ENCODE measurements at regions of chr2 and their contacts with region 1.

Region 1: GRCh38 chr2:85420536-85421259 is 2.2 kb downstream of the SH2D6 start:
- DNase-seq: peak; percentile 90 to 96
- H3K4me3 ChIP-seq: no peak overlapping the region
- H3K4me3 Mint-ChIP-seq: peak overlapping the region; percentile 69
- H3K27ac Mint-ChIP-seq: peak overlapping the region; percentile 80
- H3K4me1 ChIP-seq: peaks cover 47% of the 10 kb centered on the region
- H3K4me1 Mint-ChIP-seq: peaks cover 36% of the 10 kb centered on the region
- H3K27me3 ChIP-seq: no peaks in the 10 kb centered on the region
- H3K27me3 Mint-ChIP-seq: no peaks in the 10 kb centered on the region
- CTCF ChIP-seq: peak; percentile 99 to 100

Region 2: DNA sequence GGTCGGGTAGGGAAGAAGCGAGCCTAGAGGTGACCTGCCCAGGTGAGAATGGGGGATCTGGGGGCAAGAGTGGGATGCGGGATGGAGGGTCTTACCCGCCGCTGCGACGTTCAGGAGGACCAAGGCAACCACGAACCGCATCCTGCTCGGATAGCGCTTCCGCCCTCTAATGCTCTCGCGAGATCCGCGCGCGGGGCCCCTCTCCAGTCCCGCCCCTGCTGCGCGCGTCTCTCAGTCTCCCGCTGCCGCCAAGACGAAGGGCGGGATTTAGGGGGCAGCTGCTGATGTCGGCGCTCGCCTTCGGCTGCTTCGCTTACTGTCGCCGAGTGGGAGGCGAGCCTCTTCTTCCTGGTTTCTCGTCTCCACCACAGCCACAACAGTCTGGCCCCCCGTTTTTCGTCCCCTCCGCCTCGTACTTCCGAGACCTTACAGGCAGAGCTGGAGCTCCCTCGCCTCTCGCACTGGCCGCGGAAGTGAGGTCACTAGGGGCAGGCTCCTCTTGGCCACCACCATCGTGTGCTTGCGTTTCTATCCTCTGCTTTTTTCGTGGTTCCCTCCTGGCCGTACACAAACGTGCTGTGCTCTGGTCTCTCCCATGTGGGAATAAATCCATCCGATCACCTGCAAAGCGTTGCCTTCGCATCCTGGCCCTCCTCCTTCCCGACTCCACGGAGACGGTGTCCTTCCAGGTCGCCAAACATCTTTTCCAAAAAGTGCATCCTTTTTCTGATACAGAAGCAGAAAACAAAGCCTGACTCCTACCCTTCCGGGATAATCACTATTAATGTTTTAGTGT is 92.7 kb before region 1 on chr2 and contains the start of gene TGOLN2:
- CTCF ChIA-PET with region 1: no interaction called
- POLR2A ChIA-PET with region 1: interaction called, 8 read pairs
- intact Hi-C with region 1: loop called (anchors 2 kb)
- DNase-seq: peak; percentile 91 to 94
- H3K4me3 ChIP-seq: peak within 1 kb of the TSS; percentile 93
- H3K4me3 Mint-ChIP-seq: peak within 1 kb of the TSS; percentile 86
- H3K27ac Mint-ChIP-seq: peak within 1 kb of the TSS; percentile 97
- H3K4me1 ChIP-seq: peaks cover 25% of the 10 kb centered on the region
- H3K4me1 Mint-ChIP-seq: peaks cover 22% of the 10 kb centered on the region
- H3K27me3 ChIP-seq: no peaks in the 10 kb centered on the region
- H3K27me3 Mint-ChIP-seq: no peaks in the 10 kb centered on the region
- CTCF ChIP-seq: peak in 1 of 2 experiments; percentile 14
- total RNA-seq, gene TGOLN2: 109 and 119 TPM in 2 replicates

Region 3: DNA sequence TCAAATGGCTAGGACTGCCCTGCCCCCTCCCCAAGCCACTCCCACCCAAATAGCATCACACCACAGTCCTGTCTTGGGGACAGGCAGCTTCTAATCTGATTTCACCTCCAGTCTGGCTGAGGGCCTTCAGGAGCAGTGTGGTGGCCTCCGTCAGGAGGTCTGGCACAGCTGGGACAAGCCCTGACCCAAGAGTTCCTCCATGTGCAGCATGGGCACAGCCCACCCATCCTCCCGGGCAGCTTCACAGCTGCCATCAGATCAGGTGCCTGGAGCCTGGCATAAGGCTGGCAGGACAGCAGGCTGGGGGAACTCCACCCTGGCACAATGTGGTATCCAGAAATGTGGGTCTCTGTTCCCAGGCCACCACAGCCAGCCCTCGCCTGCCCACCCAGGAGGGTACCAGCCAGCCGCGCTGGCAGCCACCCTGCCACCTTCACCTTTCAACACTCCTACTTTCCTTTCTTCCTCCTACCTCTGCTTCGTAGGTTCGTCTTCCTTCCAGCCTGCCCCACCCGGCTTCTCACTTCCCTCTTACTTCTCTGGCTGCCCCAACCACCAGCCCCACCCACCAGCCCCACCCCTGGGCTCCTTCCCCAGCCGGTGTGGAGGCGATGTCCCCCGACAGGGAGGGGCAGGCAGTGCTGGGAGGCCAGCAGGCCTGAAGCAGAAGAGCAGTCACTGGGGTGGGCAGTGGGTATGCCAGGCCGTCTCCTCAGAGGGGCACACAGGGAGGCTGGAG is 10.7 kb before region 1 on chr2 and contains the start of gene CAPG:
- CTCF ChIA-PET with region 1: no interaction called
- POLR2A ChIA-PET with region 1: interaction called, 10 read pairs
- intact Hi-C with region 1: no loop called
- DNase-seq: peak in 1 of 2 experiments; percentile 24
- H3K4me3 ChIP-seq: no peak within 1 kb of the TSS
- H3K4me3 Mint-ChIP-seq: no peak within 1 kb of the TSS
- H3K27ac Mint-ChIP-seq: no peak within 1 kb of the TSS
- H3K4me1 ChIP-seq: no peaks in the 10 kb centered on the region; the same call in 1 of the 2 replicates
- H3K4me1 Mint-ChIP-seq: peaks cover 9% of the 10 kb centered on the region
- H3K27me3 ChIP-seq: no peaks in the 10 kb centered on the region
- H3K27me3 Mint-ChIP-seq: no peaks in the 10 kb centered on the region
- CTCF ChIP-seq: no peak
- total RNA-seq, gene CAPG: 6.2 and 10.0 TPM in 2 replicates

Region 4: DNA sequence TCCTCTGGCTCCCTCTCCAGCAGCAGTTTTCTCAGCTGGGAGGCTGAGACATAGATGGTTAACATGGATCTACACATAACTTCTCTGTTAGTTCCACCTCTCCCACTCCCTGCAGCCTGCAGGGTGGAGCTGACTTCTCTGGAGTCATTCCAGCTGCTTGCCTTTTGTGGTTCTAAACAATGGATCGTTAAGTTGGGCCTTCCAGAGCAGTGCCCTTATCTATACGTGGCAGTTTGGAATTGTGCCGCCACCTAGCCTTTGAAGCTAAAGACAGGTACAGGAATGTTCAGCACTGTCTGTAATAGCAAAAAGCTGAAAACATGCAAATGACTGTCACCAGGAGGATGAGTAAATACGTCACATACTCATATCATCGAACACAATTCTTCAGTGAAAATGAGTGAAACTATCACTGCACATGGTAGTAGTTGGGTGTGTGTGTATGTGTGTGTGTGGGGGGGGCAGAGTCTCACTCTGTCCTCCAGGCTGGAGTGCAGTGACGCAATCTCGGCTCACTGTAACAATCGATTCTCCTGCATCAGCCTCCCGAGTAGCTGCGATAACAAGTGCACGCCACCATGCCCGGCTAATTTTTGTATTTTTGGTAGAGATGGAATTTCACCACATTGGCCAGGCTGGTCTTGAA is 48.1 kb after region 1 on chr2:
- CTCF ChIA-PET with region 1: interaction called, 3 read pairs
- POLR2A ChIA-PET with region 1: interaction called, 4 read pairs
- intact Hi-C with region 1: loop called (anchors 1 kb)
- DNase-seq: peak; percentile 70 to 86
- H3K4me3 ChIP-seq: no peak overlapping the region
- H3K4me3 Mint-ChIP-seq: peak overlapping the region; percentile 20
- H3K27ac Mint-ChIP-seq: peak overlapping the region; percentile 82
- H3K4me1 ChIP-seq: peaks cover 18% of the 10 kb centered on the region
- H3K4me1 Mint-ChIP-seq: peaks cover 23% of the 10 kb centered on the region
- H3K27me3 ChIP-seq: no peaks in the 10 kb centered on the region
- H3K27me3 Mint-ChIP-seq: no peaks in the 10 kb centered on the region
- CTCF ChIP-seq: no peak

Region 5: GRCh38 chr2:85538486-85539360 is 118.0 kb after region 1 on chr2 and contains the start of gene MAT2A:
- CTCF ChIA-PET with region 1: interaction called, 25 read pairs
- POLR2A ChIA-PET with region 1: interaction called, 73 read pairs
- intact Hi-C with region 1: loop called (anchors 1 kb)
- DNase-seq: peak; percentile 97 to 99
- H3K4me3 ChIP-seq: peak within 1 kb of the TSS; percentile 98
- H3K4me3 Mint-ChIP-seq: peak within 1 kb of the TSS; percentile 97
- H3K27ac Mint-ChIP-seq: peak within 1 kb of the TSS; percentile 99
- H3K4me1 ChIP-seq: peaks cover 6% of the 10 kb centered on the region
- H3K4me1 Mint-ChIP-seq: peaks cover 34% of the 10 kb centered on the region
- H3K27me3 ChIP-seq: no peaks in the 10 kb centered on the region
- H3K27me3 Mint-ChIP-seq: no peaks in the 10 kb centered on the region
- CTCF ChIP-seq: peak; percentile 81 to 85
- total RNA-seq, gene MAT2A: 217 and 250 TPM in 2 replicates

Region 6: GRCh38 chr2:85602476-85603234 is 182.0 kb after region 1 on chr2 and contains the start of gene TMEM150A:
- CTCF ChIA-PET with region 1: no interaction called
- POLR2A ChIA-PET with region 1: no interaction called
- intact Hi-C with region 1: loop called (anchors 1 kb)
- DNase-seq: peak; percentile 92 to 96
- H3K4me3 ChIP-seq: peak within 1 kb of the TSS; percentile 83
- H3K4me3 Mint-ChIP-seq: peak within 1 kb of the TSS; percentile 87
- H3K27ac Mint-ChIP-seq: peak within 1 kb of the TSS; percentile 81
- H3K4me1 ChIP-seq: peaks cover 12% of the 10 kb centered on the region; the same call in 1 of the 2 replicates
- H3K4me1 Mint-ChIP-seq: peaks cover 13% of the 10 kb centered on the region
- H3K27me3 ChIP-seq: no peaks in the 10 kb centered on the region
- H3K27me3 Mint-ChIP-seq: no peaks in the 10 kb centered on the region
- CTCF ChIP-seq: peak; percentile 47 to 55
- total RNA-seq, gene TMEM150A: 24.0 and 25.3 TPM in 2 replicates

Measured in Caco-2 (cell line).